Right cardiac atrium (tissue), 5 donors: ENCODE measurements at regions of chr7 and their contacts with region 1.

Region 1: GRCh38 chr7:65927489-65928448 is 54.2 kb downstream of the GUSB start:
- DNase-seq: peak in 1 of 3 donors; percentile 33
- ATAC-seq: peak; percentile 26 to 69
- H3K4me3 ChIP-seq: no peak overlapping the region
- H3K27ac ChIP-seq: no peak overlapping the region
- H3K4me1 ChIP-seq: peaks cover 3% of the 10 kb centered on the region
- H3K27me3 ChIP-seq: no peaks in the 10 kb centered on the region

Region 2: DNA sequence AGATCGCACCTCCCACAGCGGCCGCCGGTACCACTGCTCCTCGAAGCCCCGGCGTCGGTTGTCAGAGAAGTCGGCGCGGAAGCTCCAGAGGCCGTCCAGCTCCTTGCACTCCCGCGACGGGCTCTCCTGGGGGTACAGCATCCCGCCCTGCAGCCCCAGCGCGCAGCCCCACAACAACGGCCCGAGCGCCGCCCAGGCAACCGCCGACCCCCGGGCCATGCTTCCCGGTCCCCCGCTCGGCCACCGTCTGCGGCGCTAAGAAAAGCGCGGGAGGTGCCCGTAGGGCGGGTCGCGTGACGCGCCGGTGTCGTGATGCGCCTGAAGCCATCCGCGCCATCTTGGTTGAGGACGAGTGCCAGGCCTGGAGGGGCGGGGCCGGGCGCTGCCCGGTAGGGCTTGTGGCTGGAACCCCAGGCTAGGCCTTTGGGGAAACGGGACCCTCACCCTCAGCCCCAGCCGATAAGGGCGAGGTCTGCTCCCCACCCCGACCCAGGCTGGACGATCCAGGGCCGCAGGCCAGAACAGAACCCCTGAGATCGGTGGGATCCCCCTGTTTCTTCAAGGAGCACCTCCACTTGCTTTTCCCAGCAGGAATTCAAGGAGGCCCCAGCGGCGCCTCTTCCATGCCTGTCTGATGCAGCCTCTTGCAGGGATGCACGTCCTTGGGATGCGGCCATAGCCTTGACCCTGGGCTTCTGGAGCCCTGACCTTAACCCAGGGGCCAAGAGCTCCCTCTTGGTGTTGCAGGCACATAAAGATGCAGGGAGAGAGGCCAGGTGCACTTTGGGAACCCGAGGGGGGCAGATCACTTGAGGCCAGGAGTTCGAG is 54.4 kb after region 1 on chr7 and contains the start of gene GUSB:
- intact Hi-C with region 1: loop called in 1 of 4 experiments (anchors 10 kb)
- DNase-seq: peak; percentile 94 to 98 (median 97)
- ATAC-seq: peak; percentile 97
- H3K4me3 ChIP-seq: peak within 1 kb of the TSS; percentile 91
- H3K27ac ChIP-seq: peak within 1 kb of the TSS; percentile 65
- H3K4me1 ChIP-seq: peaks cover 5% of the 10 kb centered on the region
- H3K27me3 ChIP-seq: no peaks in the 10 kb centered on the region
- total RNA-seq, gene GUSB: 23.3 to 27.2 (median 25.2) TPM